Gastrocnemius medialis (tissue), 4 donors: ENCODE measurements at regions of chr3 and their contacts with region 1.

Region 1: GRCh38 chr3:141311496-141312353 is 56.6 kb upstream of the ZBTB38 start:
- DNase-seq: peak; percentile 96 to 97
- ATAC-seq: peak; percentile 99 to 100
- H3K4me3 ChIP-seq: peak overlapping the region; percentile 65 to 80 (median 70)
- H3K27ac ChIP-seq: peak overlapping the region; percentile 81 to 83 (median 82)
- H3K4me1 ChIP-seq: peaks cover 4 to 10% of the 10 kb centered on the region in 2 donors
- H3K27me3 ChIP-seq: no peaks in the 10 kb centered on the region
- CTCF ChIP-seq: peak; percentile 59 to 81 (median 75)
- POLR2A ChIP-seq: peak; percentile 38 to 39

Region 2: GRCh38 chr3:141360888-141361598 is 49.3 kb after region 1 on chr3:
- in situ Hi-C with region 1: loop called in 1 of 4 experiments (anchors 10 kb)
- intact Hi-C with region 1: loop called (anchors 5 kb)
- DNase-seq: no peak
- ATAC-seq: peak; percentile 91 to 96
- H3K4me3 ChIP-seq: peak overlapping the region in 3 of 4 donors; percentile 38 to 40 (median 40)
- H3K27ac ChIP-seq: peak overlapping the region; percentile 53 to 71 (median 63)
- H3K4me1 ChIP-seq: peaks cover 7 to 10% of the 10 kb centered on the region in 2 donors
- H3K27me3 ChIP-seq: no peaks in the 10 kb centered on the region
- CTCF ChIP-seq: peak; percentile 73 to 91 (median 77)
- POLR2A ChIP-seq: no peak

Region 3: GRCh38 chr3:141444586-141445285 is 133.0 kb after region 1 on chr3:
- in situ Hi-C with region 1: no loop called
- intact Hi-C with region 1: no loop called
- DNase-seq: no peak
- ATAC-seq: no peak
- H3K4me3 ChIP-seq: no peak overlapping the region
- H3K27ac ChIP-seq: no peak overlapping the region
- H3K4me1 ChIP-seq: peaks cover 12 to 20% of the 10 kb centered on the region in 2 donors
- H3K27me3 ChIP-seq: no peaks in the 10 kb centered on the region
- CTCF ChIP-seq: no peak
- POLR2A ChIP-seq: no peak

Region 4: GRCh38 chr3:141875374-141875892 is 563.7 kb after region 1 on chr3:
- in situ Hi-C with region 1: loop called in 1 of 4 experiments (anchors 25 kb)
- intact Hi-C with region 1: no loop called
- DNase-seq: peak; percentile 70 to 72
- ATAC-seq: peak; percentile 79 to 80
- H3K4me3 ChIP-seq: peak overlapping the region; percentile 82 to 99 (median 86)
- H3K27ac ChIP-seq: peak overlapping the region; percentile 96 to 100 (median 98)
- H3K4me1 ChIP-seq: peaks cover 19 to 23% of the 10 kb centered on the region in 2 donors
- H3K27me3 ChIP-seq: no peaks in the 10 kb centered on the region
- CTCF ChIP-seq: peak; percentile 65 to 91 (median 84)
- POLR2A ChIP-seq: no peak